Prostate gland (tissue), 2 donors: ENCODE measurements at regions of chr14 and their contacts with region 1.

Region 1: DNA sequence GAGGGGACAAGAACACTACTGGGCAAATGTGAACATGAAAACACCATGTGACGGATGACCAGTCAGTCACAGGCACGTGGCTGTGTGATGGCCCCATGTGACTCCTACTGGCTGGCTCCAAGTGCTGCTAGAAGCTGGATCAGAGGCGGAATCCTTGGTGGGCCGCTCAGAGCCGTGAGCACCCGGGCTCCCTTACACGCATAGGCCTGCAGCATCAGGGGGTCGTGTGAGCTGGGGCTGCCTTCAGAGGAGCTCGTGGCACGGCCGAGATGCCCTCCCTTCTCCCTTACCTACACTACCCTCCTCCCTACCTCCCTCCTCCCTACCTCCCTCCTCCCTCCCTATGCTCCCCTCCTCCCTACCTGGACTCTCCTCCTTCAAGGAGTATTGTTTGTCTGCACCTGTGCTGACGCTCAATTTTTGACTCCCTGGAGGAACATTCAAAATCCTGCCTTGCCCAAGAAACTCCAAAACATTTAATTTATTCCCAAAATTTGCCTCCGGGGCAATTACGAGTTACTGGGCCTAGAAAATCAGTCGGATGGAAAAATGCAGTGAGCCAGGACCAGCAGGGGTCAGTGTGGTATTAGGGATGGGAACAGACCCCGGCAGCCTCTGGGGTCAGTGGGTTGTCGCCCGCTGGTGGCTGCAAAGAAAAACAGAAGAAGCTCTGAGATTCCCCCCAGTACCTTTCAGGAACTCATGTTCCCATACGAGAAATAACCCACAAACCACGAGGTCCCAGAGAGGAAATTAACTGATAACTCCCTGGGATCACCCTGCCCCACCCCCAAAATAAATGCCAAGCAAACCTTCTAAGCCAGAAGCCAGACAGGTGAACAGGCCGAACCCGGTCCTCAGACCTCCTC is 61.2 kb downstream of the C14orf132 start:
- DNase-seq: peak; percentile 64
- H3K4me3 ChIP-seq: no peak overlapping the region
- H3K27ac ChIP-seq: no peak overlapping the region
- H3K4me1 ChIP-seq: no peaks in the 10 kb centered on the region
- H3K27me3 ChIP-seq: no peaks in the 10 kb centered on the region
- CTCF ChIP-seq: peak; percentile 73 to 93 (median 89)
- POLR2A ChIP-seq: no peak

Region 2: DNA sequence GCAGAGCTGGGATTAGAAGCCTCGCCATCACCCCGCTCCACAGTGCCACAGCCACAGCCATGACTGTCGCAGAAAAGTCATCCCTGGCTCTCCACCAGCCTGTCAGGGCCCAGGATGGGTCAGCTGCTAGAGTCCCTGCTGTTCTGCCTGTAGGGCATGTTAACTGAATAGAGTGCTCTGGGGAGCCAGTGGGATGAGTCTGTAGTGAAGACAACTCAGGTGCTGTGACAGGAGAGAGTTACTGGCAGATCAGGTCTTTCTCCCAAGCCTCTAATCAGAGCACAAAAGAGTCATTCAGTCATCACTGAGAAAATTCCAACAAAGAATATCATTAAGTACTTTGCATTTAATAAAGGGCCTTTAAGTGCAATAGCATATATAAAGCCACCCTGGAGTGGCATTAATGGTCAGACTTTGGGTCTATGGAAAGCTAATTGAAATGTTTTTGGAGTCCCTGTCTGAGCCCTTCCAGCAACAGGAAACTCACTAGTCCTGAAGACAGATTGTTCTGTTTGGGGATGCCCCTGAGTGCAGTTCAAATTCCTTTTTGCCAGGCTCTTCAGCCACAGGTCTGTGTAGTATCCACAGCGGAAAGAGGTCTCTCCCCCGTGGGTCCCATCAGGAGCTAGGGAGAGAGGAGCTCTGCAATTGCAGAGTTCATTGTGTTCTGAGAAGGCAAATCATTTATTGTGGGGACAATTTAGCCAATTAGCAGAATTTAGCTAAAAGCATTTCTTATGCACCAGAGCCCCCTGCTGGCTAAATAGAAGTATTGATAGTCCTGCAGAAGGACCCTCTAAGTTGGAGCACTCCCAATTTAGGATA is 106.4 kb before region 1 on chr14:
- intact Hi-C with region 1: loop called (anchors 2 kb)
- DNase-seq: peak; percentile 37
- H3K4me3 ChIP-seq: no peak overlapping the region
- H3K27ac ChIP-seq: no peak overlapping the region
- H3K4me1 ChIP-seq: no peaks in the 10 kb centered on the region
- H3K27me3 ChIP-seq: no peaks in the 10 kb centered on the region
- CTCF ChIP-seq: peak; percentile 55 to 82 (median 80)
- POLR2A ChIP-seq: no peak

Region 3: GRCh38 chr14:96030108-96030760 is 70.2 kb before region 1 on chr14:
- intact Hi-C with region 1: loop called (anchors 5 kb)
- DNase-seq: no peak
- H3K4me3 ChIP-seq: no peak overlapping the region
- H3K27ac ChIP-seq: no peak overlapping the region
- H3K4me1 ChIP-seq: no peaks in the 10 kb centered on the region
- H3K27me3 ChIP-seq: no peaks in the 10 kb centered on the region
- CTCF ChIP-seq: no peak
- POLR2A ChIP-seq: no peak

Region 4: GRCh38 chr14:96275177-96276112 is 175.1 kb after region 1 on chr14:
- intact Hi-C with region 1: loop called (anchors 2 kb)
- DNase-seq: peak; percentile 53
- H3K4me3 ChIP-seq: no peak overlapping the region
- H3K27ac ChIP-seq: no peak overlapping the region
- H3K4me1 ChIP-seq: no peaks in the 10 kb centered on the region
- H3K27me3 ChIP-seq: no peaks in the 10 kb centered on the region
- CTCF ChIP-seq: peak; percentile 80 to 92 (median 90)
- POLR2A ChIP-seq: no peak

Region 5: GRCh38 chr14:96424109-96424989 is 324.0 kb after region 1 on chr14:
- intact Hi-C with region 1: loop called (anchors 5 kb)
- DNase-seq: peak; percentile 50
- H3K4me3 ChIP-seq: peak overlapping the region; percentile 14 to 19
- H3K27ac ChIP-seq: no peak overlapping the region
- H3K4me1 ChIP-seq: no peaks in the 10 kb centered on the region
- H3K27me3 ChIP-seq: no peaks in the 10 kb centered on the region
- CTCF ChIP-seq: peak; percentile 57 to 89 (median 82)
- POLR2A ChIP-seq: no peak